PC-3 (cell line): ENCODE measurements at regions of chr3 and their contacts with region 1.

Region 1: DNA sequence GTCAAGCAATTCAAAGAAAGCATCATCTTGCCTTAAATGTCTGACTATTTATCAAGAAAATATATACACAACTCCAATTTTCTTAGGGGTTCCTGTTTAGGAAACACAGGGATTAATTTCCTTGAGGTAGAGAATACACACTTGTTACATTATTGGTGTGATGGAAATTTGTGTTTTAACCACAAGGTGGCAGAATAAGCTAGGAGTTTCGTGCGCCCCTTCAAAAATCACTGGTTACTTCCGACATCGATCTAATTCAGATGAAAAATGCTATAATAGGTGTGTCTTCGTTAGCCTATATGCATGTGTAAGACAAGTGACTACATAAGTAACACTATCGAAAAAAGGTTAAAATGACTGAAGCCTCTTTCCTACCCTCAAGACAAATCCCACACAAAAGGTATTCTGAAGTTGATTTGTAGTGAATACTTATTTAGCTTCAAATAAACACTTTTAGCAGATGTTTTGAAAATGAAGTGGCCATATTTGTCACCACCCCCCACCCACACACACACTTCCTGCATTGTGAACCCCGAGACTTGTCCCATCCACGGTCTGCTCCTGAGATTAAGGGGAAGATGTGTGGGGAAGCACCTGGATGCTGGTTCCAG is 246.5 kb downstream of the ROBO1 start:
- DNase-seq: peak; percentile 84
- ATAC-seq: peak; percentile 72
- H3K4me3 ChIP-seq: peak overlapping the region; percentile 33; the same call in 1 of the 2 replicates
- H3K27ac ChIP-seq: no peak overlapping the region
- H3K4me1 ChIP-seq: no peaks in the 10 kb centered on the region; the same call in 1 of the 2 replicates
- H3K27me3 ChIP-seq: no peaks in the 10 kb centered on the region
- CTCF ChIP-seq: peak; percentile 83

Region 2: GRCh38 chr3:79233431-79234060 is 287.8 kb before region 1 on chr3:
- CTCF ChIA-PET with region 1: no interaction called
- POLR2A ChIA-PET with region 1: no interaction called
- intact Hi-C with region 1: no loop called
- DNase-seq: no peak
- ATAC-seq: no peak
- H3K4me3 ChIP-seq: no peak overlapping the region
- H3K27ac ChIP-seq: no peak overlapping the region
- H3K4me1 ChIP-seq: no peaks in the 10 kb centered on the region
- H3K27me3 ChIP-seq: no peaks in the 10 kb centered on the region
- CTCF ChIP-seq: no peak

Region 3: GRCh38 chr3:79383402-79384012 is 137.8 kb before region 1 on chr3:
- CTCF ChIA-PET with region 1: no interaction called
- POLR2A ChIA-PET with region 1: no interaction called
- intact Hi-C with region 1: no loop called
- DNase-seq: peak; percentile 36
- ATAC-seq: no peak; the same call in 1 of the 2 replicates
- H3K4me3 ChIP-seq: no peak overlapping the region
- H3K27ac ChIP-seq: no peak overlapping the region
- H3K4me1 ChIP-seq: no peaks in the 10 kb centered on the region
- H3K27me3 ChIP-seq: peaks cover 24% of the 10 kb centered on the region
- CTCF ChIP-seq: no peak

Region 4: GRCh38 chr3:79724203-79724602 is 202.9 kb after region 1 on chr3:
- CTCF ChIA-PET with region 1: no interaction called
- POLR2A ChIA-PET with region 1: no interaction called
- intact Hi-C with region 1: loop called (anchors 5 kb)
- DNase-seq: peak; percentile 37
- ATAC-seq: no peak
- H3K4me3 ChIP-seq: no peak overlapping the region
- H3K27ac ChIP-seq: no peak overlapping the region
- H3K4me1 ChIP-seq: no peaks in the 10 kb centered on the region
- H3K27me3 ChIP-seq: no peaks in the 10 kb centered on the region
- CTCF ChIP-seq: peak; percentile 65

Region 5: DNA sequence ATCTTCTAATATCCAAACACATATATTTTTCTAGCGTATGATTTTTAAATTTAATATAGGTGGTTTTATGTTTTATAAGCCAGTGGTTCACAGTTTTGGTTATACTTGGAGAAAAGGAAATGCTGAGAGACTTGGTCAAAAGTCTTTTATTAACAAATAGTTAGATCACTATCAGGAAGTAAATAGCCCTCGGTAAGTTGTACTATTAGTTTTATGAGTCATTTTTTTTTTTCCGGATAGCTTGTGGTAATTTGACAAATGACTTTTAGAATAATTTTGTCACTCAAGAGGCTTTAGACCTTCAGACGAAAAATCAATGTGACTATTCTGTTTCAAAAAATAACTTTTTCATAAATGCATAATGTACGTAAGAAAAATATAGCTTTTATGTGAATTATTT is 478.7 kb after region 1 on chr3:
- CTCF ChIA-PET with region 1: no interaction called
- POLR2A ChIA-PET with region 1: no interaction called
- intact Hi-C with region 1: loop called (anchors 5 kb)
- DNase-seq: peak; percentile 91
- ATAC-seq: peak; percentile 78
- H3K4me3 ChIP-seq: peak overlapping the region; percentile 20; the same call in 1 of the 2 replicates
- H3K27ac ChIP-seq: peak overlapping the region; percentile 82
- H3K4me1 ChIP-seq: peaks cover 39% of the 10 kb centered on the region
- H3K27me3 ChIP-seq: no peaks in the 10 kb centered on the region
- CTCF ChIP-seq: no peak

Region 6: GRCh38 chr3:80153866-80154265 is 632.5 kb after region 1 on chr3:
- CTCF ChIA-PET with region 1: no interaction called
- POLR2A ChIA-PET with region 1: no interaction called
- intact Hi-C with region 1: loop called (anchors 1 kb)
- DNase-seq: no peak
- ATAC-seq: no peak
- H3K4me3 ChIP-seq: no peak overlapping the region
- H3K27ac ChIP-seq: no peak overlapping the region
- H3K4me1 ChIP-seq: no peaks in the 10 kb centered on the region
- H3K27me3 ChIP-seq: no peaks in the 10 kb centered on the region
- CTCF ChIP-seq: no peak

Region 7: GRCh38 chr3:80677796-80678195 is 1156.5 kb after region 1 on chr3:
- CTCF ChIA-PET with region 1: interaction called, 7 read pairs
- POLR2A ChIA-PET with region 1: no interaction called
- intact Hi-C with region 1: loop called (anchors 1 kb)
- DNase-seq: peak; percentile 55
- ATAC-seq: peak; percentile 99
- H3K4me3 ChIP-seq: no peak overlapping the region
- H3K27ac ChIP-seq: no peak overlapping the region
- H3K4me1 ChIP-seq: no peaks in the 10 kb centered on the region
- H3K27me3 ChIP-seq: no peaks in the 10 kb centered on the region
- CTCF ChIP-seq: no peak

Region 8: DNA sequence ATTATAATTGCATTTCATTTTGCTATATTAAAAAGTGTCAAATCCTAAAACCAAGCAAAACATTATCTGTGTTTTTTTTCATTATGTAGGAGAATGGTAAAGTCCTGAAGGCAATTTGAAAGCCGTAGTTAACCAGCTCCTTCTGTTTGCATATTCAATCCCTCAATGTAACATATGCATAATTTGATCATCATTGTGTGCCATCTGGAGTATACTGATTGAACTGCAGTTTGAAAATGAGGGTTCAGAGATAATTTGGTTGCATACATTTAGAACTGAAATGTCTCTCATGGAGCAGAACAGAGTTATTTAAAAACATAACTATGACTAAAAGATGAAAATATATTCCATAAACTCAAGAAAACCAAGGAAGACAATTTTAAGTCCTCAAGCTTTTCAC is 1721.5 kb after region 1 on chr3:
- CTCF ChIA-PET with region 1: no interaction called
- POLR2A ChIA-PET with region 1: no interaction called
- intact Hi-C with region 1: loop called (anchors 10 kb)
- DNase-seq: peak; percentile 70
- ATAC-seq: peak; percentile 65
- H3K4me3 ChIP-seq: no peak overlapping the region
- H3K27ac ChIP-seq: no peak overlapping the region
- H3K4me1 ChIP-seq: no peaks in the 10 kb centered on the region
- H3K27me3 ChIP-seq: no peaks in the 10 kb centered on the region
- CTCF ChIP-seq: peak; percentile 82